ENCODE measurements at regions of chr16 and their contacts with region 1.

Region 1: GRCh38 chr16:807347-808084 is 7.0 kb upstream of the GNG13 start:
- DNase-seq: peak; percentile 66
- ATAC-seq: peak; percentile 94
- H3K4me3 ChIP-seq: peak overlapping the region; percentile 73 to 75
- H3K27ac ChIP-seq: peak overlapping the region; percentile 77
- H3K4me1 ChIP-seq: peaks cover 24% of the 10 kb centered on the region
- H3K27me3 ChIP-seq: no peaks in the 10 kb centered on the region
- CTCF ChIP-seq: no peak

Region 2: GRCh38 chr16:796296-797119 is 11.0 kb before region 1 on chr16:
- CTCF ChIA-PET with region 1: no interaction called
- POLR2A ChIA-PET with region 1: interaction called, 10 read pairs
- in situ Hi-C with region 1: no loop called
- intact Hi-C with region 1: no loop called
- DNase-seq: no peak
- ATAC-seq: no peak
- H3K4me3 ChIP-seq: no peak overlapping the region
- H3K27ac ChIP-seq: no peak overlapping the region; the same call in 1 of the 2 replicates
- H3K4me1 ChIP-seq: peaks cover 33% of the 10 kb centered on the region
- H3K27me3 ChIP-seq: no peaks in the 10 kb centered on the region
- CTCF ChIP-seq: no peak

Region 3: GRCh38 chr16:1042049-1042744 is 234.7 kb after region 1 on chr16:
- CTCF ChIA-PET with region 1: no interaction called
- POLR2A ChIA-PET with region 1: interaction called, 16 read pairs
- in situ Hi-C with region 1: no loop called
- intact Hi-C with region 1: no loop called
- DNase-seq: no peak
- ATAC-seq: no peak
- H3K4me3 ChIP-seq: no peak overlapping the region
- H3K27ac ChIP-seq: no peak overlapping the region
- H3K4me1 ChIP-seq: no peaks in the 10 kb centered on the region; the same call in 1 of the 2 replicates
- H3K27me3 ChIP-seq: no peaks in the 10 kb centered on the region
- CTCF ChIP-seq: no peak